HCT116 (cell line): ENCODE measurements at regions of chr3 and their contacts with region 1.

Region 1: DNA sequence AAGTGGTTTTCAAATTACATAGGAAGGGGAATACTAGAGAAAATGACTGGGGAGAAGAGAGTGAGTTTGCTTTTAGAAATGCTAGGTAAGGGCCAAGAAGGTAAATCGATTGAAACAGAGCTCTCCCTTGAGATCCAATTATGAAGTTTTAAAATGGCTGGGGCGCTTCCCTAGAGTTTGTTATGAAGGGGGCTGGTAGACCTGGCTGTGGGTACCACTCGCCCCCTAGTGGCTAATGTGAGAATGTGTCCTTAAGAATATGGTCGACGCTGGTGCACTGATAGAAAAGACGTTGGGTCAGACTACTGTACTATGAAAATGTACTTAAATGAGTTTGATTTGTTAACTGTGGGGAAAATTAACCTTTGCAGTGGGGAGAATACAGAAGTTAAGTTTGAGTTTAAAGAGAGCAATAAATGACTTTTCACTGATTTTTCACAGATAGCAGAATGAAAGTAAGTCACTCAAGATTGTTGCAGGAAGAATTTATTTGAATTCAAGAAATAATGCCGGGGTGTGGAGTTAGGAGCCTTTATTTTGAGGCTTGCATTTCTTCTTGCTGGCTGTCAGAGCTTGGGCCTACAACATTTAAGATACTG is 9.2 kb downstream of the TMPRSS7 start:
- DNase-seq: peak; percentile 75
- ATAC-seq: peak; percentile 97
- H3K4me3 ChIP-seq: peak overlapping the region; percentile 11 to 40; a peak in 3 of 4 replicates
- H3K27ac ChIP-seq: no peak overlapping the region; the same call in 1 of the 2 replicates
- H3K4me1 ChIP-seq: peaks cover 0 to 26% of the 10 kb centered on the region in 2 experiments; a peak in 2 of 4 replicates
- H3K27me3 ChIP-seq: no peaks in the 10 kb centered on the region
- CTCF ChIP-seq: peak; percentile 87 to 99 (median 96)
- POLR2A ChIP-seq: no peak
- RAD21 ChIP-seq: peak; percentile 91

Region 2: GRCh38 chr3:111989061-111989678 is 54.5 kb before region 1 on chr3:
- CTCF ChIA-PET with region 1: interaction called, 30 read pairs
- POLR2A ChIA-PET with region 1: no interaction called
- RAD21 ChIA-PET with region 1: interaction called in 1 of 2 experiments, 4 read pairs
- intact Hi-C with region 1: loop called (anchors 2 kb)
- DNase-seq: peak; percentile 63
- ATAC-seq: peak; percentile 87
- H3K4me3 ChIP-seq: no peak overlapping the region
- H3K27ac ChIP-seq: peak overlapping the region; percentile 20; the same call in 1 of the 2 replicates
- H3K4me1 ChIP-seq: no peaks in the 10 kb centered on the region
- H3K27me3 ChIP-seq: no peaks in the 10 kb centered on the region
- CTCF ChIP-seq: peak; percentile 76 to 94 (median 86)
- POLR2A ChIP-seq: no peak
- RAD21 ChIP-seq: peak; percentile 78

Region 3: DNA sequence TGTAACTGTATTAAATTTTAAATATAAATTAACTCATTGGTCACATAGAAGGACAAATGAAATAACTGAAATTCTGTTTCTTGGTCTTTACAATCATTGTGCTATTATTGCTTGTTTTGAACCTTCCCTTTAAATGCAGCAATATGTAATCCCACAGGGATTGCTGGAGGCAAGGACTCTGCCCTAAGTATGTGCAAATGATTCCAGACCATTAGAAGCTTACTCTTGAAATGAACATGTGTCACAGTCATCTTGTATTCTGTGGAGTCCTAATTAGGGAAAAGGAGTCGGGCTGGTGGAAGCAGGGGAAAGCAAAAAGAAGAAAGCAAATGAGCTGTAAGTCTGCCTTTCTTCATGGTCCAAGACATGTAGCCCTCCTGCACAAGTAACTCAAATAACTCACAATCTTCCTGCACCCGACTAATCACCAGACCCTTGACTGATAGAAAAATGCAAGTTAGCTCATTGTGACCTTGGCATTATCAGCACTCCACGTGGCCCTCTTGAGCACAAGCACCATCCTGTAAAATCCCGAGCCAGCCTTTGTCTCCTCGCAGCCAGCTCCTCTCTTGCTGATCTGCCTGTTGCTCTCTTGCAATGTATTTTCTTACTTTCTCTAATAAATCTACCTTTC is 11.5 kb before region 1 on chr3:
- CTCF ChIA-PET with region 1: interaction called, 10 read pairs
- POLR2A ChIA-PET with region 1: no interaction called
- RAD21 ChIA-PET with region 1: no interaction called
- intact Hi-C with region 1: no loop called
- DNase-seq: no peak
- ATAC-seq: no peak
- H3K4me3 ChIP-seq: no peak overlapping the region
- H3K27ac ChIP-seq: no peak overlapping the region
- H3K4me1 ChIP-seq: no peaks in the 10 kb centered on the region
- H3K27me3 ChIP-seq: no peaks in the 10 kb centered on the region
- CTCF ChIP-seq: no peak
- POLR2A ChIP-seq: no peak
- RAD21 ChIP-seq: no peak

Region 4: DNA sequence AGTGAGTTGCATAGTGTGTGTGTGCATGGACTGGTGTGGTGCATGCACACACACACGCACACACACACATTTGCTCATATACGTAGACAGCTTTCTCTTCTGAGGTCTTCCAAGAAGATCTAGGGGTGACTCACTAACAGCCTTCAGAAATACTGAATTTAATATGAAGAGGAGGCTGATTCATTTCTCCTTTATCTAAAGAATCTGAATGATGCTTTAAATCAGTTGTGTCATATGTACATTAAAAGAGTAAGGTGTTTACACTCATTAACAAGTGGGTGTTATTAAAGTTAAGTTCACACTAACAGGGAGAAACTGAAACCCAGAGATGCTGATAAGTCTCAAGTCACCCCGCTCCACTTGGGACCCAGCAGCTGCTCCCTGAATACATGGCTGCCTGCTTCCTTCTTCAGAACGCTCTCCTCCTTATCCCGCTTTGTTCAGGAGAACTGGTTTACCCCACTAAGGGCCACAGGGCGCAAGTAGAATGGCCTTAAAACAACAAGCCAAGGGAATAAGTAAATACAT is 12.8 kb after region 1 on chr3:
- CTCF ChIA-PET with region 1: interaction called, 17 read pairs
- POLR2A ChIA-PET with region 1: no interaction called
- RAD21 ChIA-PET with region 1: no interaction called
- intact Hi-C with region 1: no loop called
- DNase-seq: no peak
- ATAC-seq: no peak
- H3K4me3 ChIP-seq: no peak overlapping the region
- H3K27ac ChIP-seq: no peak overlapping the region
- H3K4me1 ChIP-seq: 0 out of 4 replicates have a peak, but pooled peaks cover 0 to 3% of the 10 kb centered on the region in 2 experiments
- H3K27me3 ChIP-seq: no peaks in the 10 kb centered on the region
- CTCF ChIP-seq: no peak
- POLR2A ChIP-seq: no peak
- RAD21 ChIP-seq: no peak